Lower leg skin (tissue), 4 donors: ENCODE measurements at regions of chr6 and their contacts with region 1.

Region 1: DNA sequence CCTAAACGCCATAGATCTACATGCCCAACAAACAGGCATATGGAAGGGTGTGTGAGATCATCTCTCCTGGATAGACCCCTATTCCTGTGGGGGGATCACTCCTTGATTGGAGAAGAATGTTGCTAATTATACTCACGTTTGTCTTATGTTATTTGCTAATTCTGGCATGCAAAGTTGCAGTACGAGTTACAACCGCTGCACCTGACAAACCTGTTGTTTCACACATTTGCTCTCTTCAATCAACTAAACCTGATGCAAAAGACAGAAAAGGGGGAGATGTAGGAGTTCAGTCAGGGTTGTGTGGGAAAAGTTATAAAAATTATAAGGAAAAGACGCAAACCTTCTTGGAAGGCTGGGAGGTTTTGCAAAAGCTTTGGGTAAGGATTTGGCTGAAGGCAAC is 70.5 kb upstream of the ASCC3 start:
- DNase-seq: no peak
- H3K4me3 ChIP-seq: no peak overlapping the region
- CTCF ChIP-seq: no peak
- POLR2A ChIP-seq: no peak

Region 2: DNA sequence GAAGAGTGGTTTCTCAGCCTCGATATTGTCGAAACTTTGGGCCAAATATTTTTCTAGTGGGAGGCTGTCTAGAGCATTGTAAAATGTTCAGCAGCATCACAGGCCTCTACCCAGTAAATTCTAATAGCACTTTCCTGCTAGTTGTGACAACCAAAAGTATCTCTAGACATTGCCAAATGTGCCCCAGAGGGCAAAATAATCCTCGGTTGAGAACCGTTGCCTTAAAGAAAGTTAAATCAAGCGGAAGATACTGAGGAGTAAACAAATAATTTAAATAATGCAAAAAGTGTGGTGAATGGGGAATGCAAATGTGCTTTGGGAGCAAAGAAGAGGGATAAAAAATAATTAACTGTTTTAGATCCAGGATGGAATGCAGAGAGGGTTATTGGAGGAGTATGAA is 36.0 kb after region 1 on chr6:
- intact Hi-C with region 1: no loop called
- DNase-seq: no peak
- H3K4me3 ChIP-seq: no peak overlapping the region
- CTCF ChIP-seq: no peak
- POLR2A ChIP-seq: no peak

Region 3: GRCh38 chr6:100998111-100998510 is 46.5 kb after region 1 on chr6:
- intact Hi-C with region 1: loop called (anchors 1 kb)
- DNase-seq: no peak
- H3K4me3 ChIP-seq: no peak overlapping the region
- CTCF ChIP-seq: no peak
- POLR2A ChIP-seq: no peak